Heart right ventricle (tissue), 16 donors: ENCODE measurements at regions of chr4 and their contacts with region 1.

Region 1: GRCh38 chr4:140252742-140253555 is 99.0 kb upstream of the MAML3 start:
- DNase-seq: peak; percentile 65 to 80
- ATAC-seq: peak; percentile 88 to 94 (median 92)
- H3K4me3 ChIP-seq: peak overlapping the region; percentile 43 to 95 (median 73)
- H3K27ac ChIP-seq: peak overlapping the region; percentile 72 to 99 (median 94)
- H3K4me1 ChIP-seq: peaks cover 0 to 45% (median 23%) of the 10 kb centered on the region in 9 donors
- H3K27me3 ChIP-seq: no peaks in the 10 kb centered on the region
- CTCF ChIP-seq: peak; percentile 89 to 98 (median 96)

Region 2: GRCh38 chr4:139651282-139652194 is 601.4 kb before region 1 on chr4:
- intact Hi-C with region 1: loop called in 2 of 10 experiments (anchors 10 kb)
- DNase-seq: peak; percentile 76 to 86
- ATAC-seq: peak; percentile 74 to 94 (median 88)
- H3K4me3 ChIP-seq: peak overlapping the region in 2 of 10 donors; percentile 24 to 32
- H3K27ac ChIP-seq: peak overlapping the region in 1 of 10 donors; percentile 36
- H3K4me1 ChIP-seq: peaks cover 0 to 13% (median 6%) of the 10 kb centered on the region in 9 donors
- H3K27me3 ChIP-seq: no peaks in the 10 kb centered on the region
- CTCF ChIP-seq: peak; percentile 82 to 98 (median 93)

Region 3: DNA sequence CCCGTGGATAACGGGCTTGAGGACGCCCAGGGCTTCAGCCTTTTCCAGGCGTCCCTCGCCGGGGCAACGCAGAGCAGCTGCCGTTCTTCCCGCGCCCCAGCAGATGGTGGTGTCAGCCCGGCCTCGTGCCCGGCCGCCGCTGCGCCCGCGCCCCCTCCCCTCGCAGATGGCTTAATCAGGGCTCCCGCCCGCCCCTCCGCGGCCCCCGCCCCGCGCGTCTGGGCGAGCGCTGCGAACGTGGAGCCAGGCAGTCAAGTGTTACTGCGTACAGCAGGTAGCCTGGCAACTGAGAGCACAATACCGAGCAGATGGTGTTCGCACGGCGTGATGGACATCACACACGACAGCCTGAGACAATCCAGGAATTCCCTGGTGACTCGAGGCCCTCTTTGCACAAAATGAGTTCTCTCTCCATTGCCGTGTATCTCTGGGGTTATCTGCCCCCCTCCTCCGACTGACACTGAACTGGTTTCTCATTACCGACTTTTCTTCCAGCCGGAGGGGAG is 518.0 kb before region 1 on chr4:
- intact Hi-C with region 1: loop called (anchors 1 to 10 kb)
- DNase-seq: peak; percentile 90 to 91
- ATAC-seq: peak; percentile 94 to 97 (median 94)
- H3K4me3 ChIP-seq: peak overlapping the region; percentile 34 to 66 (median 59)
- H3K27ac ChIP-seq: peak overlapping the region; percentile 78 to 93 (median 86)
- H3K4me1 ChIP-seq: peaks cover 11 to 62% (median 50%) of the 10 kb centered on the region in 9 donors
- H3K27me3 ChIP-seq: no peaks in the 10 kb centered on the region
- CTCF ChIP-seq: peak; percentile 81 to 98 (median 92)

Region 4: DNA sequence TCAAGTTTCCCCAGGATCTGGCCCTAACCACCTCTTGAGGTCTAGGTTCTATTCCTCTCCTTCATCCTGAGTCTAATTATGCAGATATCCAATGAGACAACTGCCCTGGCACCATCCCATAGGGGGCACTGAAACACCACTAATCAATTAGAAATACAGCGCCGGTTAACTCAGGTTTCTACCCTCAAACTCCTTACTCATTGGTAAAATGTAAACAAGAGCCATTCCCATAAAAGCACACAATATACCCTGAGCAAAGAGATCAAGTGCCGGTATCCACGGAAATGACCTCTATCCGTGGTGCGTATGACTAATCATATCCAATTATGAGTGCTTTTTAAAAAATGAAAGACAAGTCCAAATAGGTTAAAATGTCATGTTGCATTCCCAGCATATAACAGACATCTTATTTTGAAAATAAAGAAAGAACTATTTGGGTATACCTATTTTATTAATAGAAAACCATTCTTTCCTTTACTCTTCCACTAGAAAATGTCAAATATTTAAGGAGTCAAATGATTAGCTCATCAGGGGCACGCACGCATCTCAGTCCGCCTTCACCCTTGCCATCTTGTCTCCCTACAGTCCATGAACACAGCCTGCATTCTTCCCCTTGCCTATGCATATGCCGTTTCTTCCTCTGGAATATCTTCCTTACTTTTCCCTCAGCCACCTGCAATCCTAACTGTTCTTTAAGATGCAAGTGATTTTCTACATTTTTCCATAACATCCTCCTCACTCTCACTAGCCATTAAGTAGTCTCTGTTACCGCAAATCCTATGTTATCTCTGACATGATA is 240.1 kb before region 1 on chr4:
- intact Hi-C with region 1: loop called in 8 of 10 experiments (anchors 1 to 5 kb)
- DNase-seq: peak; percentile 19 to 66
- ATAC-seq: peak; percentile 44 to 94 (median 89)
- H3K4me3 ChIP-seq: peak overlapping the region in 1 of 10 donors; percentile 17
- H3K27ac ChIP-seq: no peak overlapping the region
- H3K4me1 ChIP-seq: peaks cover 0 to 12% (median 0%) of the 10 kb centered on the region in 9 donors
- H3K27me3 ChIP-seq: no peaks in the 10 kb centered on the region
- CTCF ChIP-seq: peak; percentile 29 to 73 (median 65)

Region 5: GRCh38 chr4:140049024-140049848 is 203.7 kb before region 1 on chr4:
- intact Hi-C with region 1: loop called (anchors 2 to 10 kb)
- DNase-seq: peak; percentile 15 to 56
- ATAC-seq: peak; percentile 60 to 90 (median 83)
- H3K4me3 ChIP-seq: peak overlapping the region in 9 of 10 donors; percentile 16 to 55 (median 49)
- H3K27ac ChIP-seq: peak overlapping the region in 9 of 10 donors; percentile 21 to 84 (median 66)
- H3K4me1 ChIP-seq: peaks cover 2 to 60% (median 46%) of the 10 kb centered on the region in 9 donors
- H3K27me3 ChIP-seq: no peaks in the 10 kb centered on the region
- CTCF ChIP-seq: peak in 4 of 9 donors; percentile 9 to 57 (median 50)

Region 6: GRCh38 chr4:140153718-140154571 is 99.0 kb before region 1 on chr4 and contains the start of gene MAML3:
- intact Hi-C with region 1: loop called (anchors 1 to 10 kb)
- DNase-seq: peak; percentile 95
- ATAC-seq: peak; percentile 62 to 83 (median 74)
- H3K4me3 ChIP-seq: peak within 1 kb of the TSS; percentile 65 to 92 (median 84)
- H3K27ac ChIP-seq: peak within 1 kb of the TSS; percentile 85 to 100 (median 99)
- H3K4me1 ChIP-seq: peaks cover 0 to 44% (median 7%) of the 10 kb centered on the region in 9 donors
- H3K27me3 ChIP-seq: no peaks in the 10 kb centered on the region
- CTCF ChIP-seq: no peak
- total RNA-seq, gene MAML3: 1.3 to 4.6 (median 2.8) TPM